Ascending aorta (tissue), 2 donors: ENCODE measurements at regions of chr4 and their contacts with region 1.

Region 1: DNA sequence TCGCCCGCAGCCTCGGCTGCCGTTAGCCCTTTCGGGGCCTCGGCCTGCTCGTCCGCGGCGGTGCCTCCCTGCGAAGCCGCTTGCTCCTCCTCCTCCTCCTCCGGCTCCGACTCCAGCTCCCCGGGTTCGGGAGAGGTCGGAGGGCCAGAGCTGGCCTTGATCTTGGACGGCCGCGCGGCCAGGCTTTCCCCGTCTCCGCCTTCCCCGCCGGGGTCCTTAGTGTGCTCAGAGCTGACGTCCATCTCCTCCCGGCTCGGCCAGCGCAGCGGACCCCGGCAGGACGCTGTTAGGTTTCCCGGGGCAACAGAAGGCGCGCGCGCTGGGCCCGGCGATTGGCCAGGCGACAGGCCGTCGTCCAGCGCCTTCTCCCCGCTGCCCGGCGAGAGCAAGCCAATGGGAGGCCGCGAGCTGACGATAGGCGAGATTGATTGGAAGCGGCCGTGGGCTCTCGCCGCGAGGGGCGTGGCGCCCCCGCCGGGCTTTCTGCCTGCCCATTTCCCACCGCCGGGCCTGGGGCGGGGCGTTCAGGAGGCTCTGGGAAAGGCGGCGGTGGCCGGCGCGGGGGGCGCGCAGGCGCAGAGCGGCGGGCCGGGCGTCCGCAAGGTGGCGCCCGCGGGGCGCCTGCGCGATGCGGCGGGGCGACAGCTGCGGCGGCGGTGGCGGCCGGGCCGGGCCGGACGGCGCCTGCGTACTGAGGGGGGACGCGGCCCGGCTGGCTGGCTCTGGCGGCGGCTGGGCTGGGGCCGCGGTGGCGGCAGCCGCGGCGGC is at the start of gene TADA2B:
- DNase-seq: peak; percentile 91 to 99
- H3K4me3 ChIP-seq: peak within 1 kb of the TSS; percentile 99 to 100
- H3K27ac ChIP-seq: peak within 1 kb of the TSS; percentile 90 to 92
- H3K4me1 ChIP-seq: peaks cover 27% of the 10 kb centered on the region in 2 donors
- H3K27me3 ChIP-seq: no peaks in the 10 kb centered on the region
- CTCF ChIP-seq: peak in 2 of 3 experiments; percentile 5 to 85
- total RNA-seq, gene TADA2B: 37.3 TPM

Region 2: GRCh38 chr4:6269616-6270511 is 773.0 kb before region 1 on chr4 and contains the start of gene WFS1:
- intact Hi-C with region 1: loop called (anchors 2 kb)
- DNase-seq: peak; percentile 92 to 99
- H3K4me3 ChIP-seq: peak within 1 kb of the TSS; percentile 82 to 95
- H3K27ac ChIP-seq: peak within 1 kb of the TSS; percentile 87
- H3K4me1 ChIP-seq: peaks cover 25 to 38% of the 10 kb centered on the region in 2 donors
- H3K27me3 ChIP-seq: no peaks in the 10 kb centered on the region
- CTCF ChIP-seq: no peak
- total RNA-seq, gene WFS1: 166 TPM

Region 3: DNA sequence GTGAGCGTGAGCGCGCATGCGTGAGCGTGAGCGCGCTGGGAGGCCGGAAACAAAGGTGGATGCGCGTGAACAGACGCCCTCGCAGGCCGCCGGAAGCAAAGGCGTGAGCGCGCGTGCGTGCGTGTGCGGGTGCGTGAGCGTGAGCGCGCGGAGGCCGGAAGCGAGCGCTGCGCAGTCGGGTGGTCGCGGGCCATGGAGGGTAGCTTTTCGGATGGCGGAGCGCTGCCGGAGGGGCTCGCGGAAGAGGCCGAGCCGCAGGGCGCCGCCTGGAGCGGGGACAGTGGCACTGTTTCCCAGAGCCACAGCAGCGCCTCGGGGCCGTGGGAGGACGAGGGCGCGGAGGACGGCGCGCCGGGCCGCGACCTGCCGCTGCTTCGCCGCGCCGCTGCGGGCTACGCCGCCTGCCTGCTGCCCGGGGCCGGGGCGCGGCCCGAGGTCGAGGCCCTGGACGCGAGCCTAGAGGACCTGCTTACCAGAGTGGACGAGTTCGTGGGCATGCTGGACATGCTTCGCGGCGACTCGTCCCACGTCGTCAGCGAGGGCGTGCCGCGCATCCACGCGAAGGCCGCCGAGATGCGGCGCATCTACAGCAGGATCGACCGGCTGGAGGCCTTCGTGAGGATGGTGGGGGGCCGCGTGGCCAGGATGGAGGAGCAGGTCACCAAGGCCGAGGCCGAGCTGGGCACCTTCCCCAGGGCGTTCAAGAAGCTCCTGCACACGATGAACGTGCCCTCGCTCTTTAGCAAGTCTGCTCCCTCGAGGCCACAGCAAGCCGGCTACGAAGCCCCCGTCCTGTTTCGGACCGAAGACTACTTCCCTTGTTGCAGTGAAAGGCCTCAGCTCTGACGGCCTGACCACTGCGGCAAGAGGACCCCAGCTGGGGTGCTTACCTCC is 326.6 kb before region 1 on chr4 and contains the start of gene BLOC1S4:
- intact Hi-C with region 1: loop called (anchors 5 kb)
- DNase-seq: peak; percentile 36 to 91
- H3K4me3 ChIP-seq: peak within 1 kb of the TSS; percentile 87 to 98
- H3K27ac ChIP-seq: peak within 1 kb of the TSS; percentile 88 to 95
- H3K4me1 ChIP-seq: peaks cover 4 to 14% of the 10 kb centered on the region in 2 donors
- H3K27me3 ChIP-seq: no peaks in the 10 kb centered on the region
- CTCF ChIP-seq: peak; percentile 21 to 31 (median 23)
- total RNA-seq, gene BLOC1S4: 37.5 TPM

Region 4: DNA sequence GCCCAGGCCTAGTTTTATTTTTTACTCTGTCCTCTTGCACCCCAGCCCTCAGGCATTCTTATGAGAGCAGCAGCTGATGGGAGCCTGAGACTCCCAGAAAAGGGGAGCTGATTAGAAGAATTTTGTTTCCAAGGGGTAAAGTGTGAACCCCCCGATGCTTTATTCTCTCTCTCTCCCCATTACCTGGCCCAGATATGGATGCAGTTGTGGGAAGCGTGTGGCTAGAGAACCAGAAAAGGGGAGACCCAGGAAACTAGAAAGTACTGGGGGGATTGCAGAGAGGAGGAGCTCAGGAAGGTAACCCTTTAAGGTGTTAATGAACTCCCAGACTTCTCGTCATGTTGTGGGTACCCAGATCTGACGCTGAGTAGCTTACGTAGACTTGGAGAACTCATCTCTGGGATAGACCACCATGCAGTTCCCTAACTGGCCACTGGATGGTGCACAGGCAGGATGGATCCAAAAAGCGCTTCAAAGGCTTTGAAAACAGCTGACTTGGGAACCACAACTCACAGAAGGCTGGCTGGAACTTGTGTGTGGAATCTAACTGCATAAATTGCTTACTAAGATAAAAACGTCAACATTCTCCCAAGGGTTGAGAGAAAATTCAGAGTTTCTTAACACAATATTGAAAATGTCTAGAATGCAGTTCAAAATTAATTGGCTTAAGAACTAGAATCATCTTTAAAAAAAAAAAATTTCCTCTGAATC is 68.6 kb before region 1 on chr4:
- intact Hi-C with region 1: loop called (anchors 2 kb)
- DNase-seq: peak in 1 of 2 donors; percentile 89
- H3K4me3 ChIP-seq: no peak overlapping the region
- H3K27ac ChIP-seq: no peak overlapping the region
- H3K4me1 ChIP-seq: no peaks in the 10 kb centered on the region
- H3K27me3 ChIP-seq: no peaks in the 10 kb centered on the region
- CTCF ChIP-seq: peak; percentile 90 to 99 (median 96)

Region 5: DNA sequence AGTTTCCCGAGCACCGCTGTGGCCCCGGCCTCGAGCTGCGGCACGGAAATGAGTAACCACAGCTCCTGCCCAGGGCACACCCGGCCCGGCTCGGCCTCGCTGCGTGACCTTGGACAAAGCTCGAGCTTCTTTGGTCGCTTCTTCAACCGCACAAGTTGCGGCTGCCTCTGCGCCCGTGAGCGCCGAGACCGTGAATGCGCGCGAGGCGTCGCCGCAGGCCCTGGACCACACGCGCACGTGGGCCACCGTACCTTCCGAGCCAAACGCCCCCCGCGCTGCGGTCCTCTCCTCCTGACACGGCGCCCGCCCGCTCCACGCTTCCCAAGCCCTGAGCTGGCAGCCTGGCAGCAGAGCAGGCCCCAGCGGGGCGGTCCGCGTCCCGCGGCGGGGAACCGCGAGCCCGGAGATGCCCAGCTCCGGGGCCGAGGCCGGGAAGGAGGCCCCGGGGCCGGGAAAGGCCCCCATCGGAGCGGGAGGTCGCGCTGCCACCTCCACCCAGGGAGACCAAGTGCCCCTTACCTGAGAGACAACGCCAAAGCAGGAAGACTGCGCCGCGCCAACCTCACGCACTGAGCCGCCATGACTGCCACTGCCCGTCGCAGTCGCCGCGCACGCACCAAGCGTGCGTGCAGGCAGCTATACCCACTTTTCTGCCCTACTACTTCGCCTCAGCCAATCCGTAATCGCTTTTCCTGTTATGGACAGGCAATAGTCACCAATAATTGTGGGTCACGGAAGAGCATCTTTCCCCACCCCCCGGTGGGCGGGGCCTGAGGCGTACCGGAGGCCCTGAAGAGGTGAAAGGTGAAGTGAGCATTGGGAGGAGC is 24.8 kb after region 1 on chr4 and contains the start of gene GRPEL1:
- intact Hi-C with region 1: loop called (anchors 1 kb)
- DNase-seq: peak; percentile 98 to 100
- H3K4me3 ChIP-seq: peak within 1 kb of the TSS; percentile 90 to 94
- H3K27ac ChIP-seq: peak within 1 kb of the TSS; percentile 86 to 95
- H3K4me1 ChIP-seq: peaks cover 10 to 18% of the 10 kb centered on the region in 2 donors
- H3K27me3 ChIP-seq: no peaks in the 10 kb centered on the region
- CTCF ChIP-seq: peak in 1 of 3 experiments; percentile 4
- total RNA-seq, gene GRPEL1: 42.5 TPM